ENCODE measurements at regions of chr1 and their contacts with region 1.

Region 1: DNA sequence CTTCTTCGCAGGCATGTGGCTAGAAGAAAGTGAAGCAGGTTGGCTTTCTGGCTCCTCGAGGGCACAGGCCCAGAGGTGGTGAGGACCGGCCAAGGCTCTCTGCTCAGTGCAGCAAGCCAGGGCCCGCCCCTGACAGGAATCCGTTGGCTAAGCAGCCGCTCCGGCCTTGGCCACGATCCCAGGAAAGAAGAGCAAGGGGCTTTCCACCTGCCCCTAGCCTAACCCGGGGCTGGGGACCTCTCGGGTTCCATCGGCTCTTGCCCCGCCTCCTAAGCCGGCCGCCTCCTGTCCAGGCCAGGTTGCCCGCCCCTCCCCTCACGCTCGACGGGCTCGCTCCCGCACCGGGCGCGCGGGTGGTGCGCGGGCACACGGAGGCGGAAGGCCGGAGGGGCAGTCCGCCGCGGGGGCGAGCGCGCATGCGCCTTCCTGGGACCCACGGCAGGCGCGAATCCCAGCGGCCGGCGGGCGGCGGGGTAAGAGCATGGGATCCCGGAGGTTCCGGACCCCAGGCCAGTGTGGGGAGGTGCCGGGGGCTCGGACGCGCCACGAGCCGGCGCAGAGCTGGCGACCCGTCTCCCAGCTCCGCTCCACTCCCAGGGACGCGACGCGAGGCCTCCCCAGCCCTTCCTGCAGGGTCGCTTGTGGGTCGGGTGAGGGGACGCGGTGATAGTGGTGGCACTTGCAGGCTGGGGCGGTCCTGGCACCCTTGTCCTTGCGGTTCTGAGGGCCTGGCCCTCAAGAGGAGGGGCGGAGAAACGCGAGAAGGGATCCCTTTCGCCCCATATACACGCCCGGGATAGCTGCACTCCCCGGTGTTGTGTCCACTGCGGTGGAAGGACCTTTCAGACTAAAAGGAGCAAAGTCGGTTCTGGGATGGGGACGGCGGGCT is at the start of gene ALG6:
- DNase-seq: peak; percentile 98
- total RNA-seq, gene ALG6: 3.4 TPM

Region 2: GRCh38 chr1:63442141-63442475 is 74.6 kb after region 1 on chr1:
- intact Hi-C with region 1: no loop called
- DNase-seq: no peak

Region 3: DNA sequence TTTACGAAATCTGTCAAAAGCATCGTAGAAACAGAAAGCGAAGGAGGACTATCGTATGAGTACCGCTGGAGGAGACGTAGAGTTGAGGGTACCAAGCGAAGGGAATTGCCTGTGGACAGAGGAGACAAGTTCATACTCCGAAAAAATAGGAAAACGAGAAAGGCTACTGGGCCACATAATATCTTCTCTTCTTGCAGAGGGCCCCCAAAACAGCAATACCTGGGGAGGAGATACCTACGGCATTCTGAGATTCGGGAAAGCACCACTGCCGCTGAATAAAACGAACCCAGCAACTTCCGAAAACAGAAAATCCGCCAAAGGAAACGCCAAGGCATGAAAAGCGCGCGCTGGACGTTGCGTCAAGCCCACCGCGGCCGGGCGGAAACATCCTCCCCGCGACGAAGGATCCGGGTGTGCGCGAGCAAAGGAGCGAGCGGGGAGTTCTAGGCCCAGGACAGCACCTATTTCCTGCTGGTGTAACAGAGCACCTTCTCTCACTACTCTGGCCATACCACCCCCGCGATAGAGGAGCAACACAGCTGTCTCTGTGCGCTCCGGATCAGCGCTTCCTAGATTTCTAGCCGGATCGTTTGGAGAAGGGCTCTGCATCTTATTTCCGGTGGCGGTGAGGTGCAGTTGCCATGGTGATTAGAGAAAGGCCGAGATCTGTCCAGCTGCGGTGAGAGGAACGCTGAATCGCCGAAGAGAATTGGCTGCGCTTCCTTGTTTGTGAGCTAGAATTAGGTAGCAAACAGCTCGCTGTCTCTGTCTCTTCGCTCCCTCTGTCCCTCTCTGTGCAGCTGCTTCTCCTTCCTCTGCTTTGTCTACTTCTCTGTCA is 155.7 kb after region 1 on chr1 and contains the starts of genes EFCAB7 and ITGB3BP:
- intact Hi-C with region 1: loop called (anchors 2 kb)
- DNase-seq: peak; percentile 91
- total RNA-seq, gene EFCAB7: 4.5 TPM
- total RNA-seq, gene ITGB3BP: 11.1 TPM

Region 4: GRCh38 chr1:63593303-63593885 is 225.9 kb after region 1 on chr1 and contains the start of gene PGM1:
- intact Hi-C with region 1: loop called (anchors 10 kb)
- DNase-seq: peak; percentile 89
- total RNA-seq, gene PGM1: 199 TPM

Measured in cardiac septum (tissue), 1 donor.